Motor neuron (in vitro differentiated cells): ENCODE measurements at regions of chr5 and their contacts with region 1.

Region 1: DNA sequence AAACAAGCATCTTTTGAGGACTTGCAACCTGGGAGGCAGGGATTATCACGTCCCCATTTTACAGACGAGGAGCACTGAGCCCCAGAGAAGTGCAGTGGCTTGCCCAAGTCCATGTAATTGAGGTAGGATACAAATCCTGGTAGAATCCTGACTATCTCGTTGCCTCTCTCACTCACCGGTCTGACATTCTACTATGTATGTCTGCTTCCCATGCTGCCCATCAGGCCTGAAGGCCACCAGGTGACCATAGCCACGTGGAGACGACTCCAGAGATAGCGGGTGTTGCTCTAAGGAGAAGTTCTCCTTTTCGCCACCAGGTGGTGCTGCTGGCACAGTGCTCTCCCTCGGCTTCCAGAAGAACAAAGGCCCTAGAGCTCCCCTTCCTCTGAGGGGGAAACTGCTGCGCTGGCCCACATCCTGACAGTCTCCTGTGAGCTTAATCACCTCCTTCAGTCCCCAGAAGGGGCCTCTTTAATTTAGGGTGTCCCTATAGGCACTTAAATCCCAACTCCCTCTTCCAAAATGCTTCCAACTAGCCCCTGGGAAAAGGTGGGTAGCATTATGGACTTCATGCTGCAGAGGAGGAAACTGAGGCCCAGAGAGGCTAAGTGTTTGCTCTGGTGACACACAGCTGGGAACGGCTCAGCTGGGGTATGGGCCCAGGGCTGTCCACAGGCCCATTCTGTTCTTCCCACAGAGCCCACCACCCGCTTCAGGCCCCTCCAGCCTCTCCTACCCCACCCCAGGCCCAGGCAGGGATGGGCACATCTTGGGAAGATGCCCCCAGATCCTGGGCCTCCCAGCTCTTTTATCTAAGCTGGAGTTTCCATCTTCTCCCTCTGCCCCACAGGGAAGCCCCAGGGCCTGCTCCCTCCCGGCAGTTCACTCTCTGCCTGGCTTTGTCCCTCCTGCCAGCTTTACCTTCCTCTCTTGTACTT is 6.4 kb downstream of the SLC34A1 start:
- ATAC-seq: peak; percentile 39 to 94 (median 88)
- H3K4me3 ChIP-seq: no peak overlapping the region
- H3K27ac ChIP-seq: no peak overlapping the region
- H3K4me1 ChIP-seq: peaks cover 3 to 4% of the 10 kb centered on the region in 2 donors

Region 2: GRCh38 chr5:177497292-177498033 is 106.8 kb after region 1 on chr5 and contains the start of gene PDLIM7:
- in situ Hi-C with region 1: loop called in 2 of 9 experiments (anchors 25 kb)
- ATAC-seq: peak; percentile 56 to 82 (median 68)
- H3K4me3 ChIP-seq: peak within 1 kb of the TSS; percentile 50 to 77 (median 59)
- H3K27ac ChIP-seq: peak within 1 kb of the TSS; percentile 86 to 96
- H3K4me1 ChIP-seq: peaks cover 40 to 49% of the 10 kb centered on the region in 2 donors
- total RNA-seq, gene PDLIM7: 24.6 to 116 (median 54.3) TPM

Region 3: DNA sequence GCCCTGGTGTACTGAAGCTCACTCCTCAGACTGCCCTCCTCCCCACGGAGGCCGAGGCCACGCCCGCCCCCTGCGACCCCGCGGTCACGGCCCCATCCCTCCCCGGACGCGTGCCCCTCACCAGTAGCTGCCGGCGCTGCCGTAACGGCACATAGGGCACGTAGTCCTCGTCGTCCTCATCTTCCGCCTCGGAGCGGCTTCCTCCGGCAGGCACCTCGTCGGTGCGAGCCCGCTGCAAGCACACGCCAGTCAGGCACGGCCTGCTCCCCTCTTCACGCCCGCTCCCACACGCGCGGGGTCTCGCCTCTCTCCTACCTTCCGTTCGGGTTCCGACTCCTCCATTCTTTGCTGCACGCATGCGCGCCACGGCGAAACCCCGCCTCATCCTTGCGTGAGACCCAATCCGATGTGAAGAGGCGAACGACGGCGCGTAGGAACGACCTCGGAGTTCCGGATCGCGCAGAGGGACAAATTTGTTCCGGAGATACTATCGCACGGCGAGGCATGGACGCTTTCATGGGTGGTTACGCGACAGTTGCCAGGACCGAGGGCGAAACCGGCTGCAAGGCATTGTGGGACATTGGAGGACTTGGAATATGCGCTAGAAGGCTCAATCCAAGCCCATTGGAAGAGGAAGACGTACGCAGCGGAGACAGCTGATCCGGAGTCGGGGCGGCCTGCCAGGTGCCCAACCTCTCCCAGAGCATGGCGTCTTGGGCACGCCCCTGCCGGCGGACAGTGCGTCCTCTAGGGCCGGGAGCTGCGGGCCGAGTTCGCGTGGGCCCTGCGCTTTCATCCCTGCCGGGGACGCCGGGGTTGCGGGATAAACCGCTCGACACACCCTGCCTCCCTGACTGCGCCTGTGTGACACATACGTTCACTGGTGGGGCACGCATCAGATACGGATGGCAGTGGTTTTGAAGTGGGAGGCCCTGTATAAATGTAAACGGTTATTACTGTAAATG is 126.3 kb after region 1 on chr5 and contains the start of gene DDX41:
- in situ Hi-C with region 1: loop called in 1 of 9 experiments (anchors 25 kb)
- ATAC-seq: peak; percentile 85 to 92 (median 89)
- H3K4me3 ChIP-seq: peak within 1 kb of the TSS; percentile 81 to 94 (median 91)
- H3K27ac ChIP-seq: peak within 1 kb of the TSS; percentile 76 to 92
- H3K4me1 ChIP-seq: peaks cover 13 to 16% of the 10 kb centered on the region in 2 donors
- total RNA-seq, gene DDX41: 72.7 to 158 (median 97.0) TPM